ENCODE measurements at regions of chr10 and their contacts with region 1.

Region 1: GRCh38 chr10:94334857-94335256 is 27.9 kb downstream of the NOC3L start:
- DNase-seq: no peak
- H3K4me3 ChIP-seq: no peak overlapping the region
- H3K27ac ChIP-seq: no peak overlapping the region
- H3K27me3 ChIP-seq: no peaks in the 10 kb centered on the region
- CTCF ChIP-seq: no peak

Region 2: GRCh38 chr10:94076321-94076841 is 258.5 kb before region 1 on chr10:
- CTCF ChIA-PET with region 1: interaction called, 11 read pairs
- POLR2A ChIA-PET with region 1: no interaction called
- DNase-seq: peak; percentile 30
- H3K4me3 ChIP-seq: no peak overlapping the region
- H3K27ac ChIP-seq: no peak overlapping the region
- H3K27me3 ChIP-seq: no peaks in the 10 kb centered on the region
- CTCF ChIP-seq: peak; percentile 76

Measured in AG04450 (cell line).